Activated T-helper 1 cell treated with anti-CD3 and anti-CD28 coated beads, Interleukin-12 subunit alpha, Interleukin-12 subunit beta, Interleukin-2, Interleukin-4 antibody, amounts not matched to agents 30 ng/mL and 10 ng/mL and 1 ng/mL, durations not matched to agents 14 hours and 24 hours and 36 hours (primary cell): ENCODE measurements at regions of chr2 and their contacts with region 1.

Region 1: DNA sequence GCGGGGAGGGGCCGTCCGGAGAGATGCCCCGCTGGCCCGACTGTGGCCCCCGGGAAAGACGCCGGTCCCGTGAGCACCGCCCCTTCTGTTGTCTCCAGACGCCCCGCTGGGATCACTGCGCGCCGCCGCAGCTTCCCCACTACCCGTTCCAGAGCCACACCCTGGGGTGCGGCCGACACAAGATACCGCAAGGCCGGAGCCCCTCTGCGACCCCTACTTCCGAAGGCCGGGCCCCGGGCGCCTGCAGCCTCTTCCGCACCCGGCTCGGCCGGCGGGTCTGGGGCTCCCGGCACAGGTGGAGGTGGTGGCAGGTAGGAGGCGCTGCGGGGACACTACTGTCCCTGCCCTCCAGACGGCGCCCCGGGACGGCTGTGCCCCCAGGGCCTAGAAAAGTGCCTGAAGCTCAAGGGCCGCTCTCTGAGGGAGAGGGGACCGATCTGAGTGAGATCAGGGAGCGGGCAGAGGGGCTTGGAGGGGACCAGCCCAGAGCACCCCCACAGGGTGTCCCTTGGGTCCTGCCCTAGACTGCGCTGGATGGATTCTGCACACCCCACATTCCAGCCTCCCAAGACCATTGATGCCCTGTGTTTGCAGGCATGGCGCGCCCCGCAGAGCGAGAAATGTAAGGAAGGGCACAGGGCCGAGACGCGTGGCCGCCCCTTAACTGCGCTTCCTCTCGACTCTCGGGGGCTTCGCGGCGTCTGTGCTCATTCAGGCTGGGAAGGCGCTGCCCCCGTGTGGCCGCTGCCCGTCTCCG is 80.0 kb downstream of the GFPT1 start:
- DNase-seq: peak; percentile 45
- H3K4me3 Mint-ChIP-seq: peak overlapping the region; percentile 59
- H3K27ac Mint-ChIP-seq: no peak overlapping the region
- H3K4me1 Mint-ChIP-seq: peaks cover 10% of the 10 kb centered on the region
- H3K27me3 Mint-ChIP-seq: peaks cover 37% of the 10 kb centered on the region

Region 2: GRCh38 chr2:68943581-68944568 is 363.1 kb before region 1 on chr2:
- intact Hi-C with region 1: loop called (anchors 1 kb)
- DNase-seq: peak; percentile 36
- H3K4me3 Mint-ChIP-seq: no peak overlapping the region
- H3K27ac Mint-ChIP-seq: no peak overlapping the region
- H3K4me1 Mint-ChIP-seq: peaks cover 5% of the 10 kb centered on the region
- H3K27me3 Mint-ChIP-seq: peaks cover 47% of the 10 kb centered on the region

Region 3: GRCh38 chr2:69026026-69026425 is 281.0 kb before region 1 on chr2:
- intact Hi-C with region 1: loop called (anchors 1 kb)
- DNase-seq: peak; percentile 8
- H3K4me3 Mint-ChIP-seq: no peak overlapping the region
- H3K27ac Mint-ChIP-seq: no peak overlapping the region
- H3K4me1 Mint-ChIP-seq: no peaks in the 10 kb centered on the region
- H3K27me3 Mint-ChIP-seq: peaks cover 11% of the 10 kb centered on the region